ENCODE measurements at regions of chr2 and their contacts with region 1.

Region 1: DNA sequence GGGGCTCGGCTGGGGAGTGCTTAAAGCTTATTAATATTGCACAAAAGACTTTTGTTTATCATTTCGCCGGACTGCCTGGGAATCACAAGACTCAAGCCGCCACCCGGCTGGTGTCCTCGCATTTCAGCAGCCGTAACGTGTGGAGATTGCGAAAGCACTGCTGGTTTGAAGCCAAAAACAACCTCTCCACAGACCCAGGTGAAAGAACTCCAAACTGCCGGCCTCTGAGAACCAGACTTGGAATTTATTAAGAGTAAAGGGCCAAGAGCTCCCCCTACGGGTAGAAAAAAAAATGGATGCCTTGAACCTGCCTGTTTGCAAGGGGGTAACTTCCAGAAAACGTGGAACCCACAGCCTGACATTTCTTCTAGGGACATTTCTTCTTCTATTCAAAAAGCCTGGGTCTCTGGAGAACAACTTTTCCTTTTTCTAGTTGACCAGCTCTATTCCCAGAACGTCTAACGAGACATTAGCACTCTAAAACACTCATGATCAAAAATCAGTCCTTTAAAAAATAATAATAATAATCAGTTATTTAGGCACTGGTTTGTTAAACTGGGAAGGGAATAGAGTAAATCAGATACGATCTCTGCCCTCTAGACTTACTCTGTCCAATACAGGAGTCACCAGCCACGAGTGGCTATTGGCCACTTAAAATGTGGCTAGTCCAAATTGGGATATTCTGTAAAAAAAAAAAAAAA is 216.3 kb downstream of the C1D start:
- DNase-seq: peak in 3 of 9 experiments; percentile 10 to 18 (median 17)
- ATAC-seq: no peak
- H3K4me3 ChIP-seq: no peak overlapping the region
- H3K4me3 Mint-ChIP-seq: no peak overlapping the region
- H3K27ac ChIP-seq: no peak overlapping the region
- H3K27ac Mint-ChIP-seq: no peak overlapping the region
- H3K4me1 ChIP-seq: no peaks in the 10 kb centered on the region
- H3K4me1 Mint-ChIP-seq: no peaks in the 10 kb centered on the region
- H3K27me3 ChIP-seq: no peaks in the 10 kb centered on the region
- H3K27me3 Mint-ChIP-seq: peaks cover 5% of the 10 kb centered on the region
- CTCF ChIP-seq: peak; percentile 38

Region 2: DNA sequence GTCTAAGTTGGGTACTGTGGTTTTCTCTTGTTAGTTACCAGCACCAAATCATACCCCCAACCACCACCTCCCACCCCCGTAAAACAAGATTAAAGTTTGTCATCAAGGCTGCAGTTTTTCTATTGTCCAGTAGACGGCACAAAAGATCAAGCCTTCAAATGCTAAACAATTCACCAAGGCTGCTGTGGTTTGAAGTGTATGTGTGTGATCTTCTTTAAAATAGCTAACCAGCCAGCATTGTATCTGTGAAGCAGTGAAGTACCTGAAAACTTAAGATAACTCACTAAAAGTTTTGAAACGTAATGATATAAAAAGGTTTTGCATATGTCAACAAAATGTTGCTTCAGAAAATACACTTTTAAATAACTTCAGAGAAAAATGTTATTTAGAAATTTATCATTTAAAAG is 1417.4 kb before region 1 on chr2:
- CTCF ChIA-PET with region 1: no interaction called
- POLR2A ChIA-PET with region 1: no interaction called
- intact Hi-C with region 1: loop called in 1 of 2 experiments (anchors 5 kb)
- DNase-seq: peak in 1 of 9 experiments; percentile 13
- ATAC-seq: no peak
- H3K4me3 ChIP-seq: no peak overlapping the region
- H3K4me3 Mint-ChIP-seq: no peak overlapping the region
- H3K27ac ChIP-seq: no peak overlapping the region
- H3K27ac Mint-ChIP-seq: no peak overlapping the region
- H3K4me1 ChIP-seq: peaks cover 5% of the 10 kb centered on the region
- H3K4me1 Mint-ChIP-seq: peaks cover 16% of the 10 kb centered on the region
- H3K27me3 ChIP-seq: peaks cover 3 to 15% of the 10 kb centered on the region in 2 experiments
- H3K27me3 Mint-ChIP-seq: peaks cover 54% of the 10 kb centered on the region
- CTCF ChIP-seq: no peak

Region 3: DNA sequence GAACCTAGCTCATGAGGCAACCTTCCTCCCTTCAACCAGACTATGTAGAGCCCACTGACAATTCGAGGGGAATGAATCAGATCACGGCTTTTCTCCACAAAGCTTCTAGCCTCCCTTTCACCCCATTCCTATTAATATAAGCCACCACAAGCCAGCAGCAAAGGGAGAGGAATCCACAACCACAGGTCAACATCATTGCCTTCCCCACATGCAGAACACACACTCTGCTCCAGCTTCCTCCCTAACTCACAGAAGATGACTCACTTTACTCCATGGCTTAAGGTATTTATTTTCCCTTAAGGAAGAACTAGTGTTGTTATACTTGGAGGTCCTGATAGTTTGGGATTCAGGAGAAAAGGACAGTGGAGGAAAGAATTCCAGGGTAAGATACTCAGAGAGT is 55.9 kb before region 1 on chr2:
- CTCF ChIA-PET with region 1: no interaction called
- POLR2A ChIA-PET with region 1: no interaction called
- intact Hi-C with region 1: no loop called
- DNase-seq: no peak
- ATAC-seq: no peak
- H3K4me3 ChIP-seq: no peak overlapping the region
- H3K4me3 Mint-ChIP-seq: no peak overlapping the region
- H3K27ac ChIP-seq: no peak overlapping the region
- H3K27ac Mint-ChIP-seq: no peak overlapping the region
- H3K4me1 ChIP-seq: no peaks in the 10 kb centered on the region
- H3K4me1 Mint-ChIP-seq: no peaks in the 10 kb centered on the region
- H3K27me3 ChIP-seq: no peaks in the 10 kb centered on the region
- H3K27me3 Mint-ChIP-seq: peaks cover 6% of the 10 kb centered on the region
- CTCF ChIP-seq: no peak